Mammary epithelial cell (primary cell): ENCODE measurements at regions of chr9 and their contacts with region 1.

Region 1: DNA sequence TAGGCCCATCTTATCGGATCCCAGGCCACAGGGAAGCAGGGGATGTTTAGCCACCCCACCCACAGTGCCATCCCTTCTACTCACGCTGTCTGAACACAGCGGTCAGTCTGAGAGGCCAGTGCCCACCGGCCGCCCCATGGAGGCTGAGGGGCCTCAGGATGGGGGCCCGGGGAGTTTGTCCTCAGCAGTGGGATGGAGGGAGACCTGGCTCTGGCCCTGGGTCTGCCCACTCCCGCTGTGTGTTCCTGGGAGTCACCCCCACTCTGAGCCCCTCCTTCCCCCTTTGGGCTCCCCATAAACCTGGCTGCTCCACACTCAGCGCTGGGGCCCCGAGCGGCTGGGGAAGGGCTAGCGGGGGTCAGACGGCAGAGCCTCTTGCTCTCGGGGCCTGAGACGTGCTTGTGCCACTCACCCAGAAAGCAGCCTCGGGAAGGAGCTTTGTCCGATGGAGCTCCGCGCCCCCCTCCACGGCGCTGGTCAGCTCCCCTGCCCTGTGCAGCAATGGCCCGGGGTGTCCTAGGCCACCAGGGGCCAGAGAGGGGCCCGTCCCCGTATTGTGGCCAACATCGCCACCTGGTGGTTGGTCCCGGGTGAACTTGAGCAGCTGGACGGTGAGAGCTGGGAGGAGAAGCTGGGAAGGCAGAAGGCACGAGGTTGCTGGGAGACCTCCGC is 10.9 kb upstream of the LAMC3 start:
- DNase-seq: peak; percentile 48
- H3K4me3 ChIP-seq: no peak overlapping the region
- H3K27ac ChIP-seq: no peak overlapping the region
- H3K4me1 ChIP-seq: peaks cover 13% of the 10 kb centered on the region
- H3K27me3 ChIP-seq: no peaks in the 10 kb centered on the region
- CTCF ChIP-seq: peak; percentile 78 to 86

Region 2: DNA sequence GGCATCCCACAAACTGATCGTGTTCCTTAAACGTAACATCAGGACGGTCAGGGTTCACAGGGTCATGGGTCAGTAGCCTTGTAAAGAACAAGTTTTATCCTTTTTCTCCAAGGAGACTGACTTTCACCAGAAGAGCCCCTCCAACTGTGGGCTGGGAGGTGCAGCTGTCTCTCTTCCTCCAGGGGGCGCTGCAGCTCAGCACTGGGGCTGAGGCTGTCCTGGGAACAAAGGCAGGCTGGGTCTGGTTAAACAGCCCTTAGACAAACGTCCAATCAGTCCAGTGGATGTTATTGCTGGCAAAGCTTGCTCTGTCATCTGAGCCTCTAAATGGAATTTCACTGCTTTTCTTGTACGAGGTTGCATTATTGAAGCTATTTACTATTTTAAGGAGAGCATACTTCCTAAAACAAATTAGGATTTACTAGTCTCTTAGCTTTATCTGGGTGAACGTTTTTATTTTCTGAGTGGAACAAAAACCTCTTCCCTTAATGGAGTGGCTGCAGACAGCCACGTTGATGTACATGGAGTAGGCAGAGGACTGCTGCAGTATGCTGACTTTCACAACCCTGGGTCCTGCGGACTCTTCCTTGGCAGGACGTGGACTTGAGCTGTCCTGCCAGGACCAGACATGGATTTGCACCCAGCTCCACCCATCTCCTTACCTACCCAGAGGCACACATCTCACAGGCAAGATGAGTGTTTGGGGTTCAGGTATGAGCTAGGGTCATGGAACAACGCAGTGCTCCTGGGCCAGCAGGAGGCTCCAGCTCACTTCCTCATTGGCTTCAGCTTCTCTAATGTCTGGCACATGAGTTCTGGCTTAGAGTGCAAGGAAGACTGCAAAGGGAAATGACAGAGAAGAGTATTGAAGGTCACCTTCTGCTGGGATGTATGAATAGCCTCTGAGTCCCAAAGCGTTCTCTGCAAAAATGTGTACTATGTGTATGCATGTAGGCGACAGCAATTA is 296.7 kb before region 1 on chr9:
- CTCF ChIA-PET with region 1: no interaction called
- dilution Hi-C with region 1: loop called (anchors 5 kb)
- in situ Hi-C with region 1: loop called in 1 of 2 experiments (anchors 25 kb)
- intact Hi-C with region 1: loop called (anchors 2 kb)
- DNase-seq: peak; percentile 44
- H3K4me3 ChIP-seq: no peak overlapping the region
- H3K27ac ChIP-seq: no peak overlapping the region
- H3K4me1 ChIP-seq: peaks cover 7% of the 10 kb centered on the region
- H3K27me3 ChIP-seq: no peaks in the 10 kb centered on the region
- CTCF ChIP-seq: peak; percentile 88 to 93

Region 3: GRCh38 chr9:130770679-130771442 is 227.2 kb before region 1 on chr9:
- CTCF ChIA-PET with region 1: no interaction called
- dilution Hi-C with region 1: no loop called
- in situ Hi-C with region 1: no loop called
- intact Hi-C with region 1: loop called (anchors 5 kb)
- DNase-seq: peak; percentile 47
- H3K4me3 ChIP-seq: no peak overlapping the region
- H3K27ac ChIP-seq: no peak overlapping the region
- H3K4me1 ChIP-seq: peaks cover 10% of the 10 kb centered on the region
- H3K27me3 ChIP-seq: no peaks in the 10 kb centered on the region
- CTCF ChIP-seq: peak; percentile 45 to 60

Region 4: GRCh38 chr9:130884980-130885696 is 112.9 kb before region 1 on chr9:
- CTCF ChIA-PET with region 1: no interaction called
- dilution Hi-C with region 1: no loop called
- in situ Hi-C with region 1: no loop called
- intact Hi-C with region 1: loop called (anchors 5 kb)
- DNase-seq: no peak
- H3K4me3 ChIP-seq: no peak overlapping the region
- H3K27ac ChIP-seq: peak overlapping the region; percentile 25
- H3K4me1 ChIP-seq: peaks cover 17% of the 10 kb centered on the region
- H3K27me3 ChIP-seq: no peaks in the 10 kb centered on the region
- CTCF ChIP-seq: no peak

Region 5: DNA sequence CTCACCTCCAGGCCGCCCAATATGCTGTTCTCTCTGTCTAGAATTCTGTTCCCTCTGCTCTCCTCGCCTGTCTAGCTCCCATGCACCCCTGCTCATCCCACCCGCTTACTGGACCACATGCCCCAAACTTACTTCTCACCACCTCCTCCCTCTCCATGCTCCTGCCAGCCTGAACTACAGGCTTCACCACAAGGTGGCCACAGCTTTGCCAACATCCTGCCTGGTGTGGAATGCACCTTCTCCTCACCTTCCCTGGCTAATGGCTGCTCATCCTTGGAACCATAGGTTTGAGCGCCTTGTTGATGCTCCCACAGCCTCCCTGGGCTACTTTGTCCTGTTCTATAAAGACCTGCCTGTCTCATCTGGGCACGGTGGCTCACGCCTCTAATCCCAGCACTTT is 20.6 kb after region 1 on chr9:
- CTCF ChIA-PET with region 1: interaction called, 12 read pairs
- dilution Hi-C with region 1: no loop called
- in situ Hi-C with region 1: no loop called
- intact Hi-C with region 1: no loop called
- DNase-seq: no peak
- H3K4me3 ChIP-seq: no peak overlapping the region
- H3K27ac ChIP-seq: no peak overlapping the region
- H3K4me1 ChIP-seq: no peaks in the 10 kb centered on the region
- H3K27me3 ChIP-seq: no peaks in the 10 kb centered on the region
- CTCF ChIP-seq: peak; percentile 40 to 48